ENCODE measurements at regions of chr10 and their contacts with region 1.

Region 1: GRCh38 chr10:42367532-42368230 is 270.7 kb downstream of the ZNF33B start:
- DNase-seq: peak; percentile 43 to 51
- ATAC-seq: peak; percentile 83 to 98 (median 92)
- H3K4me3 ChIP-seq: peak overlapping the region; percentile 29
- H3K4me3 Mint-ChIP-seq: peak overlapping the region; percentile 67
- H3K27ac ChIP-seq: no peak overlapping the region
- H3K27ac Mint-ChIP-seq: peak overlapping the region in 1 of 2 donors; percentile 60
- H3K4me1 ChIP-seq: peaks cover 3% of the 10 kb centered on the region
- H3K4me1 Mint-ChIP-seq: peaks cover 0 to under 1% of the 10 kb centered on the region in 2 donors
- H3K27me3 ChIP-seq: no peaks in the 10 kb centered on the region
- H3K27me3 Mint-ChIP-seq: no peaks in the 10 kb centered on the region
- CTCF ChIP-seq: no peak

Region 2: DNA sequence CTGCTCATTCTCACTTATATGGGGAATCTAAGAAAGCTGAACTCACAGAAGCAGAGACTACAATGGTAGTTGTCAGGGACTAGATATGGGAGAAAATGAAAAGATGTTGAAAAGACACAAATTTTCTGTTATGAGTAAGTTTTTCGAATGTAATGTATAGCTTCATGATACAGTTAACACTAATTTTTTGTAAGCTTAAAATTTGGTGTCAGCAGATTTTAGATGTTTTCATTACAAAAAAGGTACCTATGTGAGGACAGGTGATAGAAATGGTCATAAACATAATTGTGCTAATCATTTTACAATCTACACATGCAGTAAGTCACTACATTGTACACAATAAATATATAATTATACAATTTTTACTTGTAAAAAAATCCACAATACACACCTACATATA is 15.9 kb before region 1 on chr10:
- intact Hi-C with region 1: no loop called
- DNase-seq: no peak
- ATAC-seq: no peak
- H3K4me3 ChIP-seq: no peak overlapping the region
- H3K4me3 Mint-ChIP-seq: no peak overlapping the region
- H3K27ac ChIP-seq: no peak overlapping the region
- H3K27ac Mint-ChIP-seq: no peak overlapping the region
- H3K4me1 ChIP-seq: no peaks in the 10 kb centered on the region
- H3K4me1 Mint-ChIP-seq: no peaks in the 10 kb centered on the region
- H3K27me3 ChIP-seq: no peaks in the 10 kb centered on the region
- H3K27me3 Mint-ChIP-seq: no peaks in the 10 kb centered on the region
- CTCF ChIP-seq: no peak

Region 3: DNA sequence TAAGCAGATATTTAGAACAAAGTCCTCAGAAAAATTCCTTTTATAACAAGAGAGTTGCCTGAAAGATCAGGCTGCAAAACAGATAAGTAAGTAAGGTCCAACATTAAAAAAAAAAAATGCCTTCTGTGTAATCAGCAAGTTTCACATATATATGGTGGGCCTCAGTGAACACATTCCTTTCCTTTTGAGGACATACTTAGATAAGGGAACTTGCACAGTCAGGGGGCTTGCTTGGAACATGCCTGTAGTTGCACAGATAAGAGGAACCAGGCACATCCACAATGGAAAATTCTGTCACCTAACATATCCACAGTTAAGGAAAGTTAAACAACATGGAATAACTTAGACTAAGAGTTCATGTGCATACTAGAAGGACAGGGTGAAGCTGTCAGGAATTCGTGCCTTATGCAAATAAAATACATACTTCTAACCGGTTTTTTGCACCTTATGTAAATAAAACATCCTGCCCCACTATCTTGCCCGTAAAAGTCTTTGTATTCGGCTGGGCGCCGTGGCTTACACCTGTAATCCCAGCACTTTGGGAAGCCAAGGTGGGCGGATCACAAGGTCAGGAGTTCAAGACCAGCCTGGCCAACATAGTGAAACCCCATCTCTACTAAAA is 13.4 kb after region 1 on chr10:
- intact Hi-C with region 1: loop called (anchors 1 kb)
- DNase-seq: no peak
- ATAC-seq: no peak
- H3K4me3 ChIP-seq: no peak overlapping the region
- H3K4me3 Mint-ChIP-seq: no peak overlapping the region
- H3K27ac ChIP-seq: no peak overlapping the region
- H3K27ac Mint-ChIP-seq: no peak overlapping the region
- H3K4me1 ChIP-seq: no peaks in the 10 kb centered on the region
- H3K4me1 Mint-ChIP-seq: no peaks in the 10 kb centered on the region
- H3K27me3 ChIP-seq: no peaks in the 10 kb centered on the region
- H3K27me3 Mint-ChIP-seq: no peaks in the 10 kb centered on the region
- CTCF ChIP-seq: no peak

Measured in natural killer cell (primary cell).